ENCODE measurements at regions of chr7 and their contacts with region 1.

Region 1: GRCh38 chr7:143214789-143215679 is 6.8 kb upstream of the TAS2R40 start:
- DNase-seq: peak; percentile 90
- H3K4me3 ChIP-seq: no peak overlapping the region
- H3K27ac ChIP-seq: no peak overlapping the region
- H3K4me1 ChIP-seq: no peaks in the 10 kb centered on the region
- H3K27me3 ChIP-seq: peaks cover 3 to 5% of the 10 kb centered on the region in 2 experiments
- CTCF ChIP-seq: peak; percentile 95 to 99
- POLR2A ChIP-seq: no peak

Region 2: GRCh38 chr7:142632291-142633134 is 582.5 kb before region 1 on chr7:
- CTCF ChIA-PET with region 1: interaction called, 12 read pairs
- POLR2A ChIA-PET with region 1: no interaction called
- dilution Hi-C with region 1: no loop called
- intact Hi-C with region 1: loop called (anchors 2 kb)
- DNase-seq: peak; percentile 74
- H3K4me3 ChIP-seq: no peak overlapping the region
- H3K27ac ChIP-seq: no peak overlapping the region
- H3K4me1 ChIP-seq: no peaks in the 10 kb centered on the region
- H3K27me3 ChIP-seq: peaks cover 1 to 3% of the 10 kb centered on the region in 2 experiments
- CTCF ChIP-seq: peak; percentile 69 to 73
- POLR2A ChIP-seq: no peak

Region 3: GRCh38 chr7:142880876-142881505 is 334.0 kb before region 1 on chr7:
- CTCF ChIA-PET with region 1: interaction called, 64 read pairs
- POLR2A ChIA-PET with region 1: no interaction called
- dilution Hi-C with region 1: no loop called
- intact Hi-C with region 1: loop called (anchors 1 kb)
- DNase-seq: peak; percentile 42
- H3K4me3 ChIP-seq: no peak overlapping the region
- H3K27ac ChIP-seq: no peak overlapping the region
- H3K4me1 ChIP-seq: no peaks in the 10 kb centered on the region
- H3K27me3 ChIP-seq: peaks cover 0 to 2% of the 10 kb centered on the region in 2 experiments
- CTCF ChIP-seq: peak; percentile 76 to 83
- POLR2A ChIP-seq: no peak

Region 4: DNA sequence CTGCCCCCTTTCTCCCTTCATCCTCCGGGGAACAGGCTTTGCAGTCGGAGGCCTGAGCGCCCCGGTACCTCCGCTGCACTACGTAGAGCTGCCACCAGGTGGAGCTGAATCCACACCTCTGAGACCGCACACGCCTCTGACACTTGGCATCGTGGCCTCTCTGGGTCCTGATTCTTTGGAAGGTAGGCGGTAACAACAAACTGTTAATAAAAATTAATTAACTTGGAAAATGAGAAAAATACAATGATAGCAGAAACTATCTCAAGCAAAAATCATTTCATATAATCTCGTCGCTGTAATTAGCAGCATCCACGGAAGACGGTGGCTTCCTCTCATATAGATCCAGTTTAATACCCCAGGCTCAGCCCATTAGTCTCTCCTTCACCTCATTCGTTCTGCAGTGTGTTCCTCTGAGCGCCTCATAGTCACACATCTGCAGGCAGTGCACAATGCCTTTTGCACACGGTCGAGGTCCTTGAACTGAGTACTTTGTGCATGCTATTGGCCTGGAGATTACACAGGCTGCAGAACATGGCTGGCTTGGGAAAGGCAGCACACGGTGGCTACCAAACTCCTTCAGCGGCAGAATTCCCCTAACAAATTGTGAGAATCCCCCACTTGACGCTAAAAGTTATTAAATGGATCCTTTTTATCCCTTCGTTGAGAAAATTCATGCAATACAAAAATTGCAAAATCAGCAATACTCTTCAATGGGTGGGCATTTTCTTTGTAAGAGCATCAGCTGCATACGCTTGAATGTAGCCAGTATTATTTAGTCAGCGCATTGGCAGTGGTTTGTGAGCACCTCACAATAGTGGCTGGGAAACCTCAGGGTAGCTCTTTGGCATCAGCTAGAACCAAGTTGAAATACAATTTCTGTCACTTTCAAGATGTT is 206.8 kb before region 1 on chr7:
- CTCF ChIA-PET with region 1: interaction called, 967 read pairs
- POLR2A ChIA-PET with region 1: interaction called, 3 read pairs
- dilution Hi-C with region 1: loop called (anchors 25 kb)
- intact Hi-C with region 1: loop called (anchors 1 kb)
- DNase-seq: peak; percentile 62
- H3K4me3 ChIP-seq: no peak overlapping the region
- H3K27ac ChIP-seq: no peak overlapping the region
- H3K4me1 ChIP-seq: peaks cover under 1% of the 10 kb centered on the region
- H3K27me3 ChIP-seq: peaks cover 15 to 18% of the 10 kb centered on the region in 2 experiments
- CTCF ChIP-seq: peak; percentile 88 to 91
- POLR2A ChIP-seq: no peak

Region 5: DNA sequence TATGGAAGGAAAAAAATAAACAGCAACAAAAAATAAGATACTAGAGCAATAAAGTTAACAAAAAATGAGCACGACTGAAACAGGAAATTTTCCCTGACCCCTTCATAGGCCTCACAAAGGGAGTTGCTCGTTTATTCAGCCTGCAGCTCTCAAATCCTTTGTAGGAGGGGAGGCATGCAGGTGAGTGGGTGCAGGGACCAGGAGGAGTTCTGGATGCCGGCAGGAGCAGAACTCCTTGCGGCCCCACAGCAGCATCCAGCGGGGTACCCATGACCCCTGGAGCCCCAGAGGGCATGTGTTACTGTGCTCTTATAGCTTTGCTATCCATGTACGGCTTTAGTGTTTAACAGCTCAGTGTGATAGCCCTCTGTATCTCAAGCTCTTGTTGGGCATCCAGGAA is 26.0 kb before region 1 on chr7:
- CTCF ChIA-PET with region 1: interaction called, 22 read pairs
- POLR2A ChIA-PET with region 1: no interaction called
- dilution Hi-C with region 1: no loop called
- intact Hi-C with region 1: no loop called
- DNase-seq: no peak
- H3K4me3 ChIP-seq: no peak overlapping the region
- H3K27ac ChIP-seq: no peak overlapping the region
- H3K4me1 ChIP-seq: no peaks in the 10 kb centered on the region
- H3K27me3 ChIP-seq: peaks cover 0 to 2% of the 10 kb centered on the region in 2 experiments
- CTCF ChIP-seq: no peak
- POLR2A ChIP-seq: no peak

Region 6: GRCh38 chr7:143299840-143300239 is 84.8 kb after region 1 on chr7:
- CTCF ChIA-PET with region 1: interaction called, 11 read pairs
- POLR2A ChIA-PET with region 1: no interaction called
- dilution Hi-C with region 1: no loop called
- intact Hi-C with region 1: no loop called
- DNase-seq: peak; percentile 29
- H3K4me3 ChIP-seq: no peak overlapping the region
- H3K27ac ChIP-seq: no peak overlapping the region
- H3K4me1 ChIP-seq: peaks cover 23% of the 10 kb centered on the region
- H3K27me3 ChIP-seq: no peaks in the 10 kb centered on the region
- CTCF ChIP-seq: peak; percentile 54 to 69
- POLR2A ChIP-seq: no peak

Region 7: GRCh38 chr7:144437370-144438191 is 1222.5 kb after region 1 on chr7:
- CTCF ChIA-PET with region 1: no interaction called
- POLR2A ChIA-PET with region 1: no interaction called
- dilution Hi-C with region 1: no loop called
- intact Hi-C with region 1: no loop called
- DNase-seq: peak; percentile 83
- H3K4me3 ChIP-seq: no peak overlapping the region
- H3K27ac ChIP-seq: no peak overlapping the region
- H3K4me1 ChIP-seq: no peaks in the 10 kb centered on the region
- H3K27me3 ChIP-seq: no peaks in the 10 kb centered on the region
- CTCF ChIP-seq: peak; percentile 38 to 42
- POLR2A ChIP-seq: no peak

Measured in endothelial cell of umbilical vein (primary cell).